ENCODE measurements at regions of chr4 and their contacts with region 1.

Region 1: GRCh38 chr4:37389967-37390580 is 145.5 kb downstream of the NWD2 start:
- DNase-seq: peak; percentile 64
- H3K4me3 Mint-ChIP-seq: no peak overlapping the region
- H3K27ac Mint-ChIP-seq: no peak overlapping the region
- H3K4me1 Mint-ChIP-seq: no peaks in the 10 kb centered on the region
- H3K27me3 Mint-ChIP-seq: no peaks in the 10 kb centered on the region
- CTCF ChIP-seq: peak; percentile 60

Region 2: GRCh38 chr4:36351082-36351666 is 1038.9 kb before region 1 on chr4:
- CTCF ChIA-PET with region 1: interaction called, 18 read pairs
- POLR2A ChIA-PET with region 1: no interaction called
- intact Hi-C with region 1: loop called (anchors 1 kb)
- DNase-seq: peak; percentile 69
- H3K4me3 Mint-ChIP-seq: no peak overlapping the region
- H3K27ac Mint-ChIP-seq: no peak overlapping the region
- H3K4me1 Mint-ChIP-seq: peaks cover 7% of the 10 kb centered on the region
- H3K27me3 Mint-ChIP-seq: no peaks in the 10 kb centered on the region
- CTCF ChIP-seq: peak; percentile 92

Region 3: DNA sequence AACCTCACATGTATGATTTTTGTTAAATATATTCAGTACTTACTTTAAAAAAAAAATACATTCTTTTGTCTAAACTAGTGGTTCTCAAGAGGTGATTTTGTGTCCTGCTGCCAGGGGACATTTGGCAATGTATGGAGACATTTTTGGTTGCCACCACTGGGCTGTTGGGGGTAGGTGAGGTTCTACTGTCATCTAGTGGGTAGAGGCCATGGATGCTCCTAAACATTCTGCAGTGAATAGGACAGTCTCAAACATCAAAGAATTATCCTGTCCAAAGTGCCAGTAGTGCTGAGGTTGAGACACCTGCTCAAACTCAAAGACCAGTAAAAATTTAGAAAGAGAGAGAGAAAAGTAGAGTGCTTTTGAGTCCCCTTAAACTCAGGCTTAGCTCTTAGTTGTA is 403.5 kb after region 1 on chr4:
- CTCF ChIA-PET with region 1: interaction called, 4 read pairs
- POLR2A ChIA-PET with region 1: no interaction called
- intact Hi-C with region 1: loop called (anchors 5 kb)
- DNase-seq: peak; percentile 46
- H3K4me3 Mint-ChIP-seq: no peak overlapping the region
- H3K27ac Mint-ChIP-seq: no peak overlapping the region
- H3K4me1 Mint-ChIP-seq: no peaks in the 10 kb centered on the region
- H3K27me3 Mint-ChIP-seq: no peaks in the 10 kb centered on the region
- CTCF ChIP-seq: peak; percentile 71

Measured in MCF 10A (cell line).